ENCODE measurements at regions of chr17 and their contacts with region 1.

Region 1: DNA sequence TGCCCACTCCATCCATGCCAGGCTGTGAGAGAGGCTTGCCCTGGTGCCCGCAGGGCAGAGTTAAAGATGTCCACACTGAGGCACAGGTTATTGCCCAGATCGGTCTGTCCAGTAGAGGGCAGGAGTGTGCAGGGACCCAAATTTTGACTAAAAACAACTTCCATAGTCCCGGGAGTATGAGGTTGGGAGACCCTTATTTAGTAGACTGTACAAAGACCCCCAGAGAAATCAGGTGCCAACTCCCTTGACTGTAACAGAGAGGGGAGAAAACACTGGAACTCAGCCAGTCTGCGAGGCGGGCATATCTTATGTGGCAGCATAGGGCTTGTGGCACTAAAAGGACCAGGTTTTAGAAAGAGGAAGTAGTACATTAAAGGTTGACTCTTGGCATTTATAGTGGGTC is 43.4 kb downstream of the HNF1B start:
- DNase-seq: peak; percentile 42 to 53 (median 51)
- H3K4me3 ChIP-seq: peak overlapping the region in 1 of 3 experiments; percentile 59
- H3K4me3 Mint-ChIP-seq: peak overlapping the region; percentile 66 to 84
- H3K27ac ChIP-seq: no peak overlapping the region
- H3K27ac Mint-ChIP-seq: peak overlapping the region in 1 of 7 donors; percentile 58
- H3K4me1 ChIP-seq: peaks cover 0 to 3% of the 10 kb centered on the region in 2 donors
- H3K4me1 Mint-ChIP-seq: peaks cover 2% of the 10 kb centered on the region
- H3K27me3 ChIP-seq: peaks cover 0 to 4% of the 10 kb centered on the region in 2 donors
- H3K27me3 Mint-ChIP-seq: peaks cover 12 to 19% (median 18%) of the 10 kb centered on the region in 3 donors
- CTCF ChIP-seq: peak; percentile 94

Region 2: DNA sequence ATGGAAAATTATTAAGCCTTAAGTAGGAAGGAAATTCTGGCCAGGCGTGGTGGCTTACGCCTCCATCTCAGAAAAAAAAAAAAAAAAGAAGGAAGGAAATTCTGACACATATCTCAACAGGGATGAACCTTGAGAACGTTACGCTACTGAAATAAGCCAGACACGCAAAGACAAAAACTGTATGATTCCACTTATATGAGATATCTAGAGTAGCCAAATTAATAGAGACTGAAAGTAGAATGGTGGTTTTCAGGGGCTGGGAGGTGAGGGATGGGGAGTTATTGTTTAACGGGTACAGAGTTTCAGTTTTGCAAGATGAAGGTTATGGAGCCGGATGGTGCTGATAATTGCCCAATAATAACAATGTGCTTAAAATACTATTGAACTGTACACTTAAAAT is 59.6 kb after region 1 on chr17:
- intact Hi-C with region 1: loop called in 1 of 2 experiments (anchors 10 kb)
- DNase-seq: peak; percentile 34 to 76 (median 72)
- H3K4me3 ChIP-seq: peak overlapping the region; percentile 15 to 68 (median 51)
- H3K4me3 Mint-ChIP-seq: peak overlapping the region; percentile 64 to 80
- H3K27ac ChIP-seq: peak overlapping the region in 1 of 2 donors; percentile 66
- H3K27ac Mint-ChIP-seq: peak overlapping the region in 6 of 7 donors; percentile 48 to 87 (median 65)
- H3K4me1 ChIP-seq: peaks cover 22 to 44% of the 10 kb centered on the region in 2 donors
- H3K4me1 Mint-ChIP-seq: peaks cover 43% of the 10 kb centered on the region
- H3K27me3 ChIP-seq: no peaks in the 10 kb centered on the region
- H3K27me3 Mint-ChIP-seq: peaks cover 7 to 12% (median 11%) of the 10 kb centered on the region in 3 donors
- CTCF ChIP-seq: no peak

Region 3: DNA sequence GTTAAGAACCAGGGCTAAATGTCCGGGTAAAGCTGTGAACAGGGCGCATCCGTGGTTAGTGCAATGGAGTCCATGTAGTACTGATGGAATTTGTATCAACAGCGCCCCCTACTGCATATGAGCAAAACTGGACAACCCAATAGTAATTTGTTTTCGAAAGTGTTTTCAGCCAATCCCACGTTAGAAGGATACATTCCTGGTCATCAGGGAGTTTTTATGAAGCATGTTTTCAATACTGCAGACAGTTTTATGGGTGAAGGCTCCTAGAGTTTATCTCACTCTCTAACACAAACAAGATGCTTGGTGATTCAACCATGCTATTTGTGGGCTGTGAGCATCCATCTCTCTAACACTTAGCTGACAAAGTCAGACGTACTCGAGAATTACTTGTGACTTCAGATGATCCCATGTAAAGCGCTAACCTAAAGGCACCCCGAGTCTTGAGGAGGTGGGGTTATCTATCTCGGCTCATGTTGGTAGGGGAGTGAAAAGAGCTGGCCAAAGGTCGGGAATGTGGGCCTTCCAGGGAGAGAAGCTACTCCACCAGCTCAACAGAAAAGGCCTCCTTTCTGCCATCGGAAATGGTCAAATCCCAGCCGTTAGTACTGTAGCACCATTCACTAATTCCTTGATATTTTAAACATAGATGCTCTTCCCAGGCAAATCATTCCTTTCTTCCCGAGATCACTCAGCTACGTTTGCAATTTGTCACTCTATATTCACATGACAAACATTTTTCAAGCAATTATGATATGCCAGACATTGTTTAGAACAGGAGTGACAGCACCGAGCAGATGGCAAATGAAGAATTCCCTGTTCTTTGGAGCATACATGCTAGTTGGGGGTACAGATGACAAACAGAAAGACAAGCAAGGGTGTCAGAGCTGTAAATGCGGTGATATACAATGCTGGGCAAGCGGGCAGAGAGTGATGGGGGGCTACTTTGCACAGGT is 90.2 kb after region 1 on chr17:
- intact Hi-C with region 1: loop called in 1 of 2 experiments (anchors 5 kb)
- DNase-seq: peak; percentile 29 to 54 (median 52)
- H3K4me3 ChIP-seq: no peak overlapping the region
- H3K4me3 Mint-ChIP-seq: no peak overlapping the region
- H3K27ac ChIP-seq: no peak overlapping the region
- H3K27ac Mint-ChIP-seq: no peak overlapping the region
- H3K4me1 ChIP-seq: no peaks in the 10 kb centered on the region
- H3K4me1 Mint-ChIP-seq: no peaks in the 10 kb centered on the region
- H3K27me3 ChIP-seq: peaks cover 0 to 5% of the 10 kb centered on the region in 2 donors
- H3K27me3 Mint-ChIP-seq: peaks cover 2 to 13% (median 11%) of the 10 kb centered on the region in 3 donors
- CTCF ChIP-seq: peak; percentile 75

Region 4: DNA sequence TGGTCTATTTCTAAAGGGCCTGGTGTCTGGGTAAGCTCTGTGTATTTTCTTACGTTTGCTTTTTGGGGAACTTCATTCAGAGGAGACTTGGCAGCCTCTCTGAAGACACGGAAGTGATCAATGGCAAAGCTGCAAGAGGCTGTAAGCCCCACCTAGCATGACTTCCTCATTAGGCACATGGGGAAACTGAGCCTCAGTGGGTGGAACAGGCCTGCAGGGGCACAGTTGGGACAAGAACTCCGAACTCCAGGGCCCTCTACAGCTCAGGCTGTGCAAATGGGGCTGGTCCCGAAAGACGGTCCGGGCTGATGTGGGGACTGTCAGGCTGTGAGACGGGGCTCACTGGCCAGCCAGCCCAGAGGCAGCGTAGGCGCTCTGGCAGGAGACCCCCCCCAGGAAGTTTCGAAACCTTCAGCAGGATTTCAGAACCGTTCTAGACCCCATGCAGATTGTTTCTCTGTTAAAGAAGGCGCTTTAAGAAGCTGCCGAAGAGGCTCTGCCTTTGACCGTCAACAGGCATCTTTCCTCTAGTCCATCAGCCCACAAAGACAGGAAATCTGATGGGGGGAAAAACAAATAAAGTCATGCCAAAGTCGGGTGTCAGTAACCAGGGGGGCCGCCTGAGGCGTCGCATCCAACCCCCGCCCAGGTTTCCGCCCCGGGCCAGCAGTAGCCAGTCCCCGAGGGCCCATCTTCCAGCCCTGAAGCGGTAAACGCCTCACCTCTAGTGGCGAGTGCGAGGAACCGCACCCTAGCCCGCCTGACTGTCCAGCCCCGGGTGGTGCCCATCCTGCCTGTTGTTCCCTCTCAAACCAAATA is 142.9 kb after region 1 on chr17:
- intact Hi-C with region 1: loop called (anchors 10 kb)
- DNase-seq: peak; percentile 69 to 91 (median 91)
- H3K4me3 ChIP-seq: peak overlapping the region; percentile 46 to 75 (median 57)
- H3K4me3 Mint-ChIP-seq: peak overlapping the region; percentile 80 to 89
- H3K27ac ChIP-seq: peak overlapping the region; percentile 88 to 96
- H3K27ac Mint-ChIP-seq: peak overlapping the region; percentile 86 to 94 (median 92)
- H3K4me1 ChIP-seq: peaks cover 50 to 52% of the 10 kb centered on the region in 2 donors
- H3K4me1 Mint-ChIP-seq: peaks cover 53% of the 10 kb centered on the region
- H3K27me3 ChIP-seq: no peaks in the 10 kb centered on the region
- H3K27me3 Mint-ChIP-seq: peaks cover 0 to 8% (median 0%) of the 10 kb centered on the region in 3 donors
- CTCF ChIP-seq: peak; percentile 98